ENCODE measurements at regions of chr1 and their contacts with region 1.

Region 1: DNA sequence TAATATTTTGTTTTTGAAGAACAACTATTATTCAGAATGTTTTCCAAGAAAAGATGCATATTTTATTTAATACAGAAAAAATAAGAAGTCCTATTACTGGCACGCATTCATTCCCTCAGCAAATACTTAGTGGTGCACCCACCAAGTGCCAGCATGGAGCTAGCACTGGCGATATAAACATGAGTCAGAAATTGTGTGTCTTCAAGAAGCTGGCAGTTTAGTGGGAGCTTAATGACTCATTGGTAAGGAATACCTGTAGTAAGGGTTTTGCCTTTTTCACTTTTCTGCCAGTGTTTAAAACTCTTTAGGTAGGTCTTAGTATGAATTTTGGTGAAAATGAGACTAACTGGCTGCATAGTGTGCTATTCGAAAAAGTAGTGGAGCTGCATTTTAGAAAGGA is 6.3 kb downstream of the MAGI3 start:
- DNase-seq: peak; percentile 90
- H3K4me3 Mint-ChIP-seq: peak overlapping the region; percentile 51
- H3K27ac Mint-ChIP-seq: peak overlapping the region; percentile 77
- H3K4me1 Mint-ChIP-seq: peaks cover 17% of the 10 kb centered on the region
- H3K27me3 Mint-ChIP-seq: no peaks in the 10 kb centered on the region
- CTCF ChIP-seq: no peak

Region 2: GRCh38 chr1:113409363-113409762 is 12.8 kb after region 1 on chr1:
- CTCF ChIA-PET with region 1: interaction called, 3 read pairs
- POLR2A ChIA-PET with region 1: interaction called, 53 read pairs
- intact Hi-C with region 1: no loop called
- DNase-seq: no peak
- H3K4me3 Mint-ChIP-seq: no peak overlapping the region
- H3K27ac Mint-ChIP-seq: no peak overlapping the region
- H3K4me1 Mint-ChIP-seq: peaks cover 19% of the 10 kb centered on the region
- H3K27me3 Mint-ChIP-seq: no peaks in the 10 kb centered on the region
- CTCF ChIP-seq: no peak

Region 3: GRCh38 chr1:113452921-113453770 is 56.6 kb after region 1 on chr1:
- CTCF ChIA-PET with region 1: interaction called, 23 read pairs
- POLR2A ChIA-PET with region 1: interaction called, 35 read pairs
- intact Hi-C with region 1: loop called (anchors 2 kb)
- DNase-seq: peak; percentile 65
- H3K4me3 Mint-ChIP-seq: no peak overlapping the region
- H3K27ac Mint-ChIP-seq: peak overlapping the region; percentile 65
- H3K4me1 Mint-ChIP-seq: peaks cover 45% of the 10 kb centered on the region
- H3K27me3 Mint-ChIP-seq: no peaks in the 10 kb centered on the region
- CTCF ChIP-seq: peak; percentile 44

Measured in MCF 10A (cell line).